Activated CD4-positive, alpha-beta memory T cell treated with anti-CD3 and anti-CD28 coated beads for 36 hours (primary cell): ENCODE measurements at regions of chr12 and their contacts with region 1.

Region 1: GRCh38 chr12:119902084-119902509 is 25.0 kb upstream of the CIT start:
- DNase-seq: peak; percentile 89
- H3K4me3 Mint-ChIP-seq: no peak overlapping the region
- H3K27ac Mint-ChIP-seq: no peak overlapping the region
- H3K4me1 Mint-ChIP-seq: peaks cover 7% of the 10 kb centered on the region
- H3K27me3 Mint-ChIP-seq: no peaks in the 10 kb centered on the region

Region 2: GRCh38 chr12:119667577-119668323 is 234.3 kb before region 1 on chr12 and contains the start of gene PRKAB1:
- CTCF ChIA-PET with region 1: interaction called, 3 read pairs
- POLR2A ChIA-PET with region 1: no interaction called
- intact Hi-C with region 1: loop called (anchors 5 kb)
- DNase-seq: peak; percentile 98
- H3K4me3 Mint-ChIP-seq: peak within 1 kb of the TSS; percentile 82
- H3K27ac Mint-ChIP-seq: peak within 1 kb of the TSS; percentile 88
- H3K4me1 Mint-ChIP-seq: peaks cover 48% of the 10 kb centered on the region
- H3K27me3 Mint-ChIP-seq: no peaks in the 10 kb centered on the region
- total RNA-seq, gene PRKAB1: 27.3 to 29.3 TPM